Dorsolateral prefrontal cortex (tissue), 120 donors: ENCODE measurements at regions of chr12 and their contacts with region 1.

Region 1: GRCh38 chr12:125183187-125184067 is 118.2 kb downstream of the AACS start:
- DNase-seq: peak; percentile 77 to 94 (median 88)
- H3K4me3 ChIP-seq: peak overlapping the region in 17 of 59 donors; percentile 1 to 41 (median 19)
- H3K27ac ChIP-seq: peak overlapping the region in 52 of 59 donors; percentile 6 to 88 (median 66)
- H3K27me3 ChIP-seq: peaks cover 0 to 11% (median 0%) of the 10 kb centered on the region in 45 donors
- CTCF ChIP-seq: peak; percentile 95 to 100 (median 99)

Region 2: DNA sequence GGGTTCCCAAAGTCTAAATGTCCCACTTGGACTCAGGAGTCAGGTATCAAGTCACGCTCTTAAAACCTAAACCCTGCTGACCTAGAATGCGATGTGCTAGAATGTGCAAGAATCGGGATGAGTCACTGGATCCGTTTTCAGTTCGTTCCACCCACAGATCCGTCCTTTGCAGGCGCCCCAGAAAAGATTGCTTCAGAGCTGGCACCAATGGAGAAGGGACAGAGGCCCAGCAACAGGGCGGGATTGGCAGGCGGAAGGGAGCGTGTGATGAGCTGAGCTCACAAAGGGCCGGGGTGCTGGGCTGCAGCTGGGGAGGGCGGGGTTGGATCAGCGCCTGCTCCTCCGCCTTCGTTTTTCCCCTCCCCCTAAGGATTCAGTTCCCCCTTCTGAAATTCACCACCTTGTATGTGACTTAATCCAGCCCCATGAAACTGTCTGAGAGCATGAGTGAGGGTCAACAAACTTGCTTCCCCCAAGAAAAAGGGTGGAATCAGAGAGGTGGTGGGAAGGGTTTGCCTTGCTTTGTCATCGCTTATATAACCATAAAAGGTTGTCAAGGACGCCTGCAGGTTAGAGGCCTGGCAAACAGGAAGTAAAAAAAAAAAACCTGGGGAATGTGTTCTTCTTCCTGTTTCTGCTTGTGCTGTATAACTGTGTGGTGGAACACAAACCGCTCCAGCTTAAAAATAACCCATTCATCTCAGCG is 266.1 kb before region 1 on chr12:
- intact Hi-C with region 1: loop called in 1 of 2 experiments (anchors 5 kb)
- DNase-seq: peak; percentile 92 to 99 (median 97)
- H3K4me3 ChIP-seq: peak overlapping the region in 58 of 59 donors; percentile 2 to 99 (median 90)
- H3K27ac ChIP-seq: peak overlapping the region; percentile 97 to 100 (median 100)
- H3K27me3 ChIP-seq: no peaks in the 10 kb centered on the region
- CTCF ChIP-seq: peak in 5 of 56 donors; percentile 9 to 28 (median 10)

Region 3: GRCh38 chr12:125038976-125039625 is 144.3 kb before region 1 on chr12:
- intact Hi-C with region 1: no loop called
- DNase-seq: no peak
- H3K4me3 ChIP-seq: no peak overlapping the region
- H3K27ac ChIP-seq: no peak overlapping the region
- H3K27me3 ChIP-seq: no peaks in the 10 kb centered on the region
- CTCF ChIP-seq: no peak

Region 4: DNA sequence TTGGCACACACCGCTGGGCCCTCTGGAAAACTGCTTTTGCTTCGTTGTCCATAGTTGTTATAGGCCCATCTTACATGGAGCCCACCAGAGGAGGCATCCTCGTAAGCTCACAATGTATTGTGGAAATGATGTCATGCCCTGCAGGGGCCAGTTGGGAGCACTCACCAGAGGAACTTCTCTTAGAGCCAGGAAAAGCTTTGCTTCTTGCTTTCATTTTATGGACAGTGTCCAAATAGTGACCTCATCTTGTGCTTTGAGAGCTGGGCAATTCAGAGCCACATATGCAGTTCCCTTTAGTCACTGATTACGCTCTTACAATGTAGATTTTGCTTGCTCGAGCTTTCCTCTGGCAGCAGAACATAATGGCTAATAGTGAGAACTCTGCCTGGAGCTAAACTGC is 157.4 kb after region 1 on chr12:
- intact Hi-C with region 1: loop called (anchors 5 to 10 kb)
- DNase-seq: peak in 2 of 10 donors; percentile 27 to 33
- H3K4me3 ChIP-seq: peak overlapping the region in 4 of 59 donors; percentile 2 to 26 (median 5)
- H3K27ac ChIP-seq: peak overlapping the region in 51 of 59 donors; percentile 4 to 81 (median 59)
- H3K27me3 ChIP-seq: no peaks in the 10 kb centered on the region
- CTCF ChIP-seq: peak in 16 of 56 donors; percentile 7 to 31 (median 17)

Region 5: DNA sequence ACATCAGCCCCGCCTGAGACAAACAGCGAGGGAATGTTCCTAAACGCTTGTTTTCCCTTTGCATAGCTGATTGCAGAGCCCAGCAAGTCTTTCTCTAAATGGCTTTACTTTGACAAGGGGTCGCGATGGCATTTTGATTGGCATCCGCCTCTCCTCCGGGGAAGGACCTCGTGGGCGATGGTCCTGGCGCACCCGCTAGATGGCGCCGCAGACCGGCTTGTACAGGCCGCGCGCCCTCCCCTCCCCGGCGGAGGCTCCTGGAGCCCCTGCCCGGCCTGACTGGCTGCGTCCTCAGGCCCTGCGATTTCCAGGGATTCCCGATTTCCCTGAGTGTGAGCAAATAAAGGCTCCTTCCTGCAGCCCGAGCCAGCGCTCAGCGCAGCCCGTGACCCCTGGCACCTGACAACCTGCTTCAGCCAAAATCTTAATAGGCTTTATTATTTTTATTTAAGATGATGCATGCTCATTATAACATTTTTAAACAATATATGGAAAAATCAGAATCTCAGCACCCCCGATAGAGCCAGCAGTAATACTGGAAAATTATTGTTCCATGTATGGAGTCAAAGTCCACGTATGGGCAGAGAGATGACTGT is 350.1 kb after region 1 on chr12:
- intact Hi-C with region 1: loop called in 1 of 2 experiments (anchors 5 kb)
- DNase-seq: peak; percentile 19 to 84 (median 70)
- H3K4me3 ChIP-seq: peak overlapping the region in 42 of 59 donors; percentile 1 to 56 (median 34)
- H3K27ac ChIP-seq: peak overlapping the region in 14 of 59 donors; percentile 8 to 78 (median 34)
- H3K27me3 ChIP-seq: no peaks in the 10 kb centered on the region
- CTCF ChIP-seq: peak; percentile 36 to 98 (median 88)

Region 6: DNA sequence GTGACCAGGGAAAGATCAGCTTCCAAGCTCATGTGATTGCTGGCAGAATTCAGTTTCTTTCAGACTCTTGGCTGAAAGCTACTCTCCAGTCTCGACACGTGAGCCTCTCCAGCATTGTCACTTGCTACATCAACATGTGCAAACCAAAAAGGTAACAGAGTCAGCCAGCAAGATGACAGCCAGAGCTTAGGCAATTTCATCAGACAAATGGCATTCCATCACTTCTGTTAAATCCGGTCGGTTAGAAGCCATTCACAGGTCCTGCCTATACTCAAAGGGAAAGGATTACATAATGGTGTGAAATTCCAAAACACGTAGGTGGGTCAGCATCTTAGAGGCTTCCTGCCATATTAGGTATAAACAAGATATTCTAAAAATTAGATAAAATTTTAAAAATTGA is 582.7 kb after region 1 on chr12:
- intact Hi-C with region 1: no loop called
- DNase-seq: no peak
- H3K4me3 ChIP-seq: no peak overlapping the region
- H3K27ac ChIP-seq: no peak overlapping the region
- H3K27me3 ChIP-seq: peaks cover 0 to 5% (median 0%) of the 10 kb centered on the region in 45 donors
- CTCF ChIP-seq: no peak

Region 7: GRCh38 chr12:126761420-126761819 is 1578.0 kb after region 1 on chr12:
- intact Hi-C with region 1: no loop called
- DNase-seq: no peak
- H3K4me3 ChIP-seq: no peak overlapping the region
- H3K27ac ChIP-seq: no peak overlapping the region
- H3K27me3 ChIP-seq: peaks cover 0 to 17% (median 0%) of the 10 kb centered on the region in 45 donors
- CTCF ChIP-seq: no peak

Region 8: GRCh38 chr12:126874427-126875026 is 1691.1 kb after region 1 on chr12:
- intact Hi-C with region 1: loop called (anchors 5 kb)
- DNase-seq: peak; percentile 37 to 83 (median 72)
- H3K4me3 ChIP-seq: no peak overlapping the region
- H3K27ac ChIP-seq: no peak overlapping the region
- H3K27me3 ChIP-seq: peaks cover 0 to 7% (median 0%) of the 10 kb centered on the region in 45 donors
- CTCF ChIP-seq: peak; percentile 60 to 96 (median 92)